Endothelial cell of umbilical vein (primary cell): ENCODE measurements at regions of chr16 and their contacts with region 1.

Region 1: GRCh38 chr16:58843675-58844074 is 109.6 kb upstream of the GOT2 start:
- DNase-seq: peak; percentile 67
- H3K4me3 ChIP-seq: no peak overlapping the region
- H3K27ac ChIP-seq: no peak overlapping the region
- H3K4me1 ChIP-seq: no peaks in the 10 kb centered on the region
- H3K27me3 ChIP-seq: no peaks in the 10 kb centered on the region
- CTCF ChIP-seq: peak; percentile 5 to 21
- POLR2A ChIP-seq: no peak

Region 2: GRCh38 chr16:58814348-58814801 is 29.3 kb before region 1 on chr16:
- CTCF ChIA-PET with region 1: interaction called, 9 read pairs
- POLR2A ChIA-PET with region 1: no interaction called
- dilution Hi-C with region 1: no loop called
- intact Hi-C with region 1: loop called (anchors 1 kb)
- DNase-seq: peak; percentile 63
- H3K4me3 ChIP-seq: peak overlapping the region in 2 of 3 experiments; percentile 17 to 59
- H3K27ac ChIP-seq: no peak overlapping the region
- H3K4me1 ChIP-seq: no peaks in the 10 kb centered on the region
- H3K27me3 ChIP-seq: no peaks in the 10 kb centered on the region
- CTCF ChIP-seq: peak; percentile 88 to 93
- POLR2A ChIP-seq: no peak

Region 3: DNA sequence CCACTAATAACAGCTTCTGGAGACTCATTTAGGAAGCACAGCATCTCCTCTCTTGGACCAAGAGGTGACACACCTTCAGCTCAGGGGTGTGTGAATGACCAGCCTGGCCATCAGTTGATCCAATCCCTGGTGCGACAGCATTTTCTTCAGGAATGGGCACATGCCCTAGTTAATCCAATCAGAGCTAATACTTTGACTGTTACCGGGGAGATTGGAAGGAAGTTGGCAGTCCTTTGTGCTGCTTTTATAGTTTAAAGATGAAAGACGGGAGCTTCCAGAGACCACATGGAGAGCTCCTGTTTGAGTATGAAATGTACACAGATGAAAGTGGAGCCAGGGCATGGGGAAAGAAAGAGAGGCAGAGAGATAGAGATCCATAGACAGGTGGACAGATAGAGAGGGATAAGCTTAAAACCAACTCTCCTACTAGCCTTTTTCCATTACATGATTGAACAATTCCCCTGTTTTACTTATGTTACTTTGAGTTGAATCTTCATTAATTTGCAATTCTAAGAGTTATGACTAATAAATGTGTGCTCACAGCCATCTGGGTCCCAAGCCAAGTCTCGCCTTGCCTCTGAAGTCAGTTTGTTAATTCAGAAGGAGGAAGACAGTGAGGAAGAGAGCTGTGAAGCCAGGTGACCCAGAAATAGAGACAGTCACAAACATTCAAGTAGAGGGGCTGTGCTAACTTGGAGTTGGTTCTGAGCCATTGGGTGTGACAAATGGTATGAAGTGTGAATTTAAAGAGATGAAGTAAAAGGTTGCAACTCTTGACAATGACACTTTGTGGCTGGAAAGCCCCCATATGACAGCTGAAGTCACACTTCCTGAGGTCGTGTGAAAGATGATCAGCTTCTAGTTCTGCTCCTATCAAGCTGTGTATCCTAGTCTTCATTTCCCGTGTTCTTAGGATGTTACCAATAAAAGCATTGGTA is 10.4 kb after region 1 on chr16:
- CTCF ChIA-PET with region 1: interaction called, 15 read pairs
- POLR2A ChIA-PET with region 1: no interaction called
- dilution Hi-C with region 1: no loop called
- intact Hi-C with region 1: no loop called
- DNase-seq: no peak
- H3K4me3 ChIP-seq: no peak overlapping the region
- H3K27ac ChIP-seq: no peak overlapping the region
- H3K4me1 ChIP-seq: no peaks in the 10 kb centered on the region
- H3K27me3 ChIP-seq: no peaks in the 10 kb centered on the region
- CTCF ChIP-seq: no peak
- POLR2A ChIP-seq: no peak

Region 4: DNA sequence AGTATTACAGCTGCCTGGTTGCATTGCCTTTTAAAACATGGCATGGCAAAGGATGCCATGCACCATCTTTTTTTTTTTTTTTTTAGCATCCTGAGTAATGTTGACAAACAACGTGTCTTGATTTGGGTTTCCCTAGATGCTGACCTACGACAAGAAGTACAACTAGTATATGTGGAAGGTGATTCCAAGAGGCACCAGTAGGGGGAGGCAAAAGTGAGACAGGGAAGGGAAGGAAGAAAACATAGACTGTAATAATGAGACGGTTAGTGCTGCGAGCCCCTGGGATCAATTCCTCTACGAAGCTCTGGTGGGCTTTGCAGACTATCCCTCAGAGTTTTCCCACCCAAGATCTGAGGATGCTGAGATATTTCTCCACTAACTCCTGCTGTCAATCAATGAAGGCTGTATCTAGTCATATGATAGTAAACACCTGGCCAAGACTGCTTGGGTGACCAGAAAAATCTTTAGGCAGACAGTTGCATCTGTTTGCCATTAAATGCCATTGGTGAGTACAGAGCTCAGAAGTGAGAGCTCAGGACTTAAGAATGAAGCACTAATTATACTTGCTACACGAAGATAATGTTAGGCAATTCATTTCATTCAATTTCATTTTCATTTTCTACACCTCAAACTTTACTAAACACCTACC is 349.0 kb after region 1 on chr16:
- CTCF ChIA-PET with region 1: no interaction called
- POLR2A ChIA-PET with region 1: no interaction called
- dilution Hi-C with region 1: no loop called
- intact Hi-C with region 1: loop called (anchors 10 kb)
- DNase-seq: peak; percentile 46
- H3K4me3 ChIP-seq: no peak overlapping the region
- H3K27ac ChIP-seq: no peak overlapping the region
- H3K4me1 ChIP-seq: peaks cover 6% of the 10 kb centered on the region
- H3K27me3 ChIP-seq: no peaks in the 10 kb centered on the region
- CTCF ChIP-seq: peak; percentile 50 to 54
- POLR2A ChIP-seq: no peak

Region 5: GRCh38 chr16:60203525-60204124 is 1360.0 kb after region 1 on chr16:
- CTCF ChIA-PET with region 1: interaction called, 25 read pairs
- POLR2A ChIA-PET with region 1: no interaction called
- dilution Hi-C with region 1: no loop called
- intact Hi-C with region 1: loop called (anchors 1 kb)
- DNase-seq: peak; percentile 49
- H3K4me3 ChIP-seq: no peak overlapping the region
- H3K27ac ChIP-seq: no peak overlapping the region
- H3K4me1 ChIP-seq: no peaks in the 10 kb centered on the region
- H3K27me3 ChIP-seq: no peaks in the 10 kb centered on the region
- CTCF ChIP-seq: peak; percentile 30 to 45
- POLR2A ChIP-seq: no peak